ENCODE measurements at regions of chr2 and their contacts with region 1.

Region 1: GRCh38 chr2:231800493-231801091 is 14.3 kb downstream of the COPS7B start:
- DNase-seq: peak; percentile 69
- H3K4me3 ChIP-seq: no peak overlapping the region
- H3K27ac ChIP-seq: no peak overlapping the region
- H3K4me1 ChIP-seq: no peaks in the 10 kb centered on the region
- H3K27me3 ChIP-seq: no peaks in the 10 kb centered on the region

Region 2: DNA sequence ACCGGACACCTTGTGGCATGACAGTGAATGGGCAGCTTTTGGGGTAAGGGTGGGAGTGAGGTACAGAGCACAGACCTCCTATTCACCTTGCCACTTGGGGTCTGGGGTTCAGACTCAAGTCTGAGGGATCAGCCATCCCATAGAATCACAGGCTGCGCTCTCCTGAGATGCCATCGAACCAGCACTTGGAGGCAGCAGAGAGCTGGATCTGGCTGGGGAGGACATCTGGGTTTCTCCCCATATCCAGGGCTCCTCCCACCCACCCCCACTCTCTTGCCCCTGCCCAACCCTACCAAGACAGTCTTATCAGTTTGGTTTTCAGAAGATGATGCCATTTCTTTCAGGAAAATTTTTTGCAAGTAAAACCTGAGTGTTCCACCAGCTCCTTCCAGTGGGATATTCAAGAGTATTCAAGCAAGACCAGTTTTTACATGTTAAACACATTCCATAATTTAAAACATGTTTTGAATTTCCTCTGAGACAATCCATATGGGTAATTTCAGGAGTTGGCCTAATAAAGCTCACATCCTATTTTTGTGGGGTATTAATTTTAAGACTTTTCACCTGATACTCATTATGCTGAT is 237.1 kb before region 1 on chr2:
- in situ Hi-C with region 1: no loop called
- DNase-seq: peak; percentile 75
- H3K4me3 ChIP-seq: no peak overlapping the region
- H3K27ac ChIP-seq: no peak overlapping the region
- H3K4me1 ChIP-seq: no peaks in the 10 kb centered on the region
- H3K27me3 ChIP-seq: no peaks in the 10 kb centered on the region

Region 3: DNA sequence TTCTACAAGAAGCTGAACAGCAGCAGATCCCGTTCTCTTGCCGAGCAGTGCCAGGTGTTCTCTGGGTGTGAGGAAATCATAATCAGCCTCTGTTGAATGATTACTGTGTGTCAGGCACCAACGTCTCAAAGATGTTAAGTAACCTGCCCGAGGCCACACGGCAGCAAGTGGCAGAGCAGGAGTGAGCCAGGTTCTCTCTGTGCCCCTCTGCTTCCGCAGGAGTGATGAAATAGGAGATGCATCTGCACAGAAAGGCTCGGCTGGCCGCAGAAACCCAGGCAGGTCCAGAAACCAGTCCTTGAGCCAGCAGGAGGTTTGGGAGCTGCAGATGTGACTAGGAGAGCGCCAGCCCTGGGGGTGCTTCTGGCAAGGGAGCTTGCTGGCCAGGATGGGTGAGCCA is 54.1 kb after region 1 on chr2:
- in situ Hi-C with region 1: loop called (anchors 5 kb)
- DNase-seq: no peak
- H3K4me3 ChIP-seq: no peak overlapping the region
- H3K27ac ChIP-seq: no peak overlapping the region
- H3K4me1 ChIP-seq: no peaks in the 10 kb centered on the region
- H3K27me3 ChIP-seq: peaks cover 27% of the 10 kb centered on the region

Region 4: GRCh38 chr2:232075080-232075479 is 274.5 kb after region 1 on chr2:
- in situ Hi-C with region 1: no loop called
- DNase-seq: peak; percentile 85
- H3K4me3 ChIP-seq: no peak overlapping the region
- H3K27ac ChIP-seq: peak overlapping the region; percentile 44
- H3K4me1 ChIP-seq: peaks cover 13% of the 10 kb centered on the region
- H3K27me3 ChIP-seq: no peaks in the 10 kb centered on the region

Measured in GM23248 (cell line).